Sciatic nerve (tissue), 2 donors: ENCODE measurements at regions of chr3 and their contacts with region 1.

Region 1: DNA sequence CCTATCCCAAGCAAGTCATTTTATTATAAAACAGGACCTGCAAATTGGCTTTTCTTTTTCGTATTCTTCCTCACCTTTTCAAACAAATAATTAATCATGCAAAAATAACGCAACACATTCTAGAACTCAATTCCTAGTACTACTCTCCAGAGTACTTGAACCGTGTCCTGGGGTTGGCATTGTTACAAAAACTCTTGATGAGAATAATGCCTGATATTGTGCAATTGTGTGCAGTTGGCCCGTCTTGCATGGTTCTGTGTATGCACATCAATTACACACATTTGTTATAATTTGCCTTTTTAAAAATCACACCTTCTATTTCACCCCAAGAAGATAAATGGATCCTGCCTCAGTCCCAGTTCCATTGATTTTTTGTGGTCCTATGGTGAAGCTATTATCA is 205.4 kb downstream of the EPHB1 start:
- DNase-seq: no peak
- ATAC-seq: no peak

Region 2: GRCh38 chr3:134978658-134979057 is 21.8 kb before region 1 on chr3:
- intact Hi-C with region 1: no loop called
- DNase-seq: no peak
- ATAC-seq: no peak

Region 3: DNA sequence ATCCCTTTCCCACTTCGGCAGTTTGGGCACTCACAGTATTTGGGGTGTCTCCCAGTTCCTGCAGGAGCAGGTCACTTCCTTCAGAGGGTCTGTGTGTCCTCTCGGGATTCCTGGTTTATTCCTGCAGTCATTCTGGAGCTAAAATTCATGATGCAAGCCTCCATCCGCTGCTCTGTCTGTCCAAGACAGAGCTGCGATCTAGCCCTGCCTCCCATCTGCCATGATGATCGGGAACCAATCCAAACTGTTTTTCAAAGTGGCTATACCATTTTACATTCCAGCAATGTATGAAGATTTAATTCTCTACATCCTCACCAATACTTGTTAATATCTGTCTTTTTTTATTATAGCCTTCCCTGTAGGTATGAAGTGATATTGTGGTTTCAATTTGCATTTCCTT is 67.5 kb after region 1 on chr3:
- intact Hi-C with region 1: no loop called
- DNase-seq: no peak
- ATAC-seq: no peak

Region 4: DNA sequence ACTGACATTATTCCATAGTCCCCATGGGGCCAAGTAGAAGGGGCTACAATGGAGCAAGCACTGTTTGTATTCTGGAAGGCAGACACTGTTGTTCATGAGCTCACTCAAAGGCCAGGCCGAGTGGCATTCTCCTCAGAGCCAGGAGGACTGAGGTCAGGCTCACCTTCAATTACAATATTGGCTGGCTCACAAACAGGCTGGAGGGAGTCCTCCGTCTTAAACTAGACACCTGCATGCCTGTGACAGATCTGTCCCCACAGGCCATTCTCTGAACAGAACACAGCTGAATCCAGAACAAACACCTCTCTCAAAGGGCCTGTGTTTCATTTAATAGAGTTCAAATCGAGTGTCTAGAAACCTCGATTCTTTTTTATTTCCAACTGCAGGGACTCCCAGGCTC is 617.7 kb after region 1 on chr3:
- intact Hi-C with region 1: loop called (anchors 5 kb)
- DNase-seq: no peak
- ATAC-seq: no peak